Activated CD8-positive, alpha-beta T cell treated with anti-CD3 and anti-CD28 coated beads for 36 hours (primary cell): ENCODE measurements at regions of chr13 and their contacts with region 1.

Region 1: GRCh38 chr13:20828539-20829364 is 55.0 kb upstream of the EEF1AKMT1 start:
- DNase-seq: peak; percentile 32
- ATAC-seq: peak; percentile 86
- H3K4me3 Mint-ChIP-seq: no peak overlapping the region
- H3K27ac Mint-ChIP-seq: peak overlapping the region; percentile 48
- H3K4me1 Mint-ChIP-seq: peaks cover 7% of the 10 kb centered on the region
- H3K27me3 Mint-ChIP-seq: no peaks in the 10 kb centered on the region
- CTCF ChIP-seq: peak; percentile 79

Region 2: GRCh38 chr13:20461481-20461859 is 367.3 kb before region 1 on chr13:
- CTCF ChIA-PET with region 1: no interaction called
- POLR2A ChIA-PET with region 1: no interaction called
- intact Hi-C with region 1: no loop called
- DNase-seq: peak; percentile 64
- ATAC-seq: peak; percentile 76
- H3K4me3 Mint-ChIP-seq: no peak overlapping the region
- H3K27ac Mint-ChIP-seq: peak overlapping the region; percentile 85
- H3K4me1 Mint-ChIP-seq: peaks cover 32% of the 10 kb centered on the region
- H3K27me3 Mint-ChIP-seq: no peaks in the 10 kb centered on the region
- CTCF ChIP-seq: no peak

Region 3: GRCh38 chr13:20713751-20714150 is 115.0 kb before region 1 on chr13:
- CTCF ChIA-PET with region 1: interaction called, 16 read pairs
- POLR2A ChIA-PET with region 1: no interaction called
- intact Hi-C with region 1: loop called (anchors 5 kb)
- DNase-seq: peak; percentile 28
- ATAC-seq: no peak
- H3K4me3 Mint-ChIP-seq: no peak overlapping the region
- H3K27ac Mint-ChIP-seq: no peak overlapping the region
- H3K4me1 Mint-ChIP-seq: peaks cover 10% of the 10 kb centered on the region
- H3K27me3 Mint-ChIP-seq: peaks cover 8% of the 10 kb centered on the region
- CTCF ChIP-seq: no peak

Region 4: DNA sequence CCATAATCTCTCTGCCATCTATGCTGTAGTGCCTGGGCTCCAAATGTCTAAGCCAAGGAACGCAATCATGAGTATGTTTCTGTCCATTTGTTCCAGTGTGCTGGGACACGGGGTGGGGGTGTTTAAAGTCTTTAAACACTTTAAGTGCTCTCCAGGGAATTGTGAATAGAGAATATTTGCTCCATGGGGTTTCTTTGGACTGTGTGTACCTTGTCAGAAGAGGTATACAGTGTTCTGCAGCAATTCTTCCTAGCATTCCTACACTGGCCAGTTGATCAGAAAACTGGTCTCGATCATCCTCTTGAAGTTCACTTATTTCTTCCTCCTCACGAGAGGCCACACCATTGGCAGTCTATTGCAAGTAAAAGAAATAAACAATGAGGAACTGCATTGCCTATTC is 19.9 kb before region 1 on chr13:
- CTCF ChIA-PET with region 1: interaction called, 13 read pairs
- POLR2A ChIA-PET with region 1: no interaction called
- intact Hi-C with region 1: no loop called
- DNase-seq: no peak
- ATAC-seq: no peak
- H3K4me3 Mint-ChIP-seq: no peak overlapping the region
- H3K27ac Mint-ChIP-seq: no peak overlapping the region
- H3K4me1 Mint-ChIP-seq: peaks cover 4% of the 10 kb centered on the region
- H3K27me3 Mint-ChIP-seq: no peaks in the 10 kb centered on the region
- CTCF ChIP-seq: no peak

Region 5: GRCh38 chr13:20840568-20840967 is 11.8 kb after region 1 on chr13:
- CTCF ChIA-PET with region 1: interaction called, 22 read pairs
- POLR2A ChIA-PET with region 1: interaction called, 3 read pairs
- intact Hi-C with region 1: no loop called
- DNase-seq: no peak
- ATAC-seq: no peak
- H3K4me3 Mint-ChIP-seq: no peak overlapping the region
- H3K27ac Mint-ChIP-seq: no peak overlapping the region
- H3K4me1 Mint-ChIP-seq: no peaks in the 10 kb centered on the region
- H3K27me3 Mint-ChIP-seq: no peaks in the 10 kb centered on the region
- CTCF ChIP-seq: no peak

Region 6: GRCh38 chr13:20924758-20925394 is 96.1 kb after region 1 on chr13:
- CTCF ChIA-PET with region 1: interaction called, 12 read pairs
- POLR2A ChIA-PET with region 1: no interaction called
- intact Hi-C with region 1: no loop called
- DNase-seq: peak; percentile 91
- ATAC-seq: peak; percentile 58
- H3K4me3 Mint-ChIP-seq: no peak overlapping the region
- H3K27ac Mint-ChIP-seq: no peak overlapping the region
- H3K4me1 Mint-ChIP-seq: no peaks in the 10 kb centered on the region
- H3K27me3 Mint-ChIP-seq: no peaks in the 10 kb centered on the region
- CTCF ChIP-seq: peak; percentile 90